ENCODE measurements at regions of chr10 and their contacts with region 1.

Region 1: GRCh38 chr10:28663576-28664313 is 13.6 kb upstream of the BAMBI start:
- H3K4me3 Mint-ChIP-seq: no peak overlapping the region
- H3K27ac Mint-ChIP-seq: no peak overlapping the region
- H3K4me1 Mint-ChIP-seq: peaks cover 14% of the 10 kb centered on the region
- H3K27me3 Mint-ChIP-seq: peaks cover 64% of the 10 kb centered on the region

Region 2: GRCh38 chr10:28991326-28992270 is 327.9 kb after region 1 on chr10:
- intact Hi-C with region 1: loop called (anchors 1 kb)
- H3K4me3 Mint-ChIP-seq: no peak overlapping the region
- H3K27ac Mint-ChIP-seq: no peak overlapping the region
- H3K4me1 Mint-ChIP-seq: no peaks in the 10 kb centered on the region
- H3K27me3 Mint-ChIP-seq: peaks cover 5% of the 10 kb centered on the region

Region 3: GRCh38 chr10:29304264-29305030 is 640.7 kb after region 1 on chr10:
- intact Hi-C with region 1: loop called (anchors 5 kb)
- H3K4me3 Mint-ChIP-seq: peak overlapping the region; percentile 37
- H3K27ac Mint-ChIP-seq: no peak overlapping the region
- H3K4me1 Mint-ChIP-seq: peaks cover 5% of the 10 kb centered on the region
- H3K27me3 Mint-ChIP-seq: peaks cover 14% of the 10 kb centered on the region